Activated CD8-positive, alpha-beta T cell treated with anti-CD3 and anti-CD28 coated beads for 36 hours (primary cell): ENCODE measurements at regions of chr10 and their contacts with region 1.

Region 1: DNA sequence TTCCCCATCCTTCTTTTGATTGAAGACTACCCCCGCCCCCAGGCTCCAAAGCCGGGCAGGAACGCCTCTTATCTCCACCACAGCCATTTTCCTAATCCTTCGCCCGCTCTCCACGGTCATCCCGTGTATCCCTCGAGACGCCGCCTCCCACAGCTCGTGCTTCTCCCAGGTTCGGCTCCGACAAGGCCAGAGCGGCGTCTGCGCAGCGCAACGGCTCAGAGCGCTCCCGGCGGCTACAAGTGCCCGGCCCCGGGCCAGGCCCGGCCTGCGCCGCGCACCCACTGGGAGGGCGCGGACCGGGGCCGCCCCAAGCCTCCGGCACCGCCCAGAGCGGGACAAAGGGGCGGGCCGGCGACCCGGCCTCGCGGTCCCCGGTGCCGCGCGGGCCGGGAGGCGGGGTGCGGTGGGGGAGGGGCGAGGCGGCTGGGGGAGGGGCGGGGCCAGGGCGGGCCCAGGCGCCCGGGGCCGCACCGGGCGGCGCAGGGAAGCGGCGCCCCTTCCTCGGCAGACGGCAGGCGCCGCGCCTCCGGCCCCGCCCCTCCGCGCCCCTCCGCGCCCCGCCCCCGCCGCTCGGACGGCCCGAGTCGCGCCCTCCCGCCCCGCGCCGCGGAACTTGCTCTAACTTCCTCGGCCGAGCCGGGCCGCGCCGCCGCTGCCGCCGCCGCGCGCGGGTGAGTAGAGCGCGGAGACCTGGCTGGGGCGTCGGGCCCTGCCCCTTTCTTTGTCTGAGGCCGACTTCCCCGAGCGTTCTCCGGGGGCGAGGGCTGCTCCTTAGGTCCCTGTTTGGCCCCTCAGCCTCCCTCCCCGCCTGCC is at the start of gene TSPAN14:
- DNase-seq: peak; percentile 77
- ATAC-seq: peak; percentile 76
- H3K4me3 Mint-ChIP-seq: peak within 1 kb of the TSS; percentile 86
- H3K27ac Mint-ChIP-seq: peak within 1 kb of the TSS; percentile 95
- H3K4me1 Mint-ChIP-seq: peaks cover 39% of the 10 kb centered on the region
- H3K27me3 Mint-ChIP-seq: no peaks in the 10 kb centered on the region
- CTCF ChIP-seq: no peak
- total RNA-seq, gene TSPAN14: 43.9 to 45.5 TPM

Region 2: GRCh38 chr10:80211786-80212185 is 242.1 kb before region 1 on chr10:
- CTCF ChIA-PET with region 1: no interaction called
- POLR2A ChIA-PET with region 1: no interaction called
- intact Hi-C with region 1: no loop called
- DNase-seq: no peak
- ATAC-seq: no peak
- H3K4me3 Mint-ChIP-seq: no peak overlapping the region
- H3K27ac Mint-ChIP-seq: no peak overlapping the region
- H3K4me1 Mint-ChIP-seq: peaks cover 10% of the 10 kb centered on the region
- H3K27me3 Mint-ChIP-seq: no peaks in the 10 kb centered on the region
- CTCF ChIP-seq: no peak

Region 3: GRCh38 chr10:80437231-80437630 is 16.7 kb before region 1 on chr10:
- CTCF ChIA-PET with region 1: no interaction called
- POLR2A ChIA-PET with region 1: no interaction called
- intact Hi-C with region 1: no loop called
- DNase-seq: no peak
- ATAC-seq: no peak
- H3K4me3 Mint-ChIP-seq: no peak overlapping the region
- H3K27ac Mint-ChIP-seq: no peak overlapping the region
- H3K4me1 Mint-ChIP-seq: no peaks in the 10 kb centered on the region
- H3K27me3 Mint-ChIP-seq: no peaks in the 10 kb centered on the region
- CTCF ChIP-seq: no peak

Region 4: DNA sequence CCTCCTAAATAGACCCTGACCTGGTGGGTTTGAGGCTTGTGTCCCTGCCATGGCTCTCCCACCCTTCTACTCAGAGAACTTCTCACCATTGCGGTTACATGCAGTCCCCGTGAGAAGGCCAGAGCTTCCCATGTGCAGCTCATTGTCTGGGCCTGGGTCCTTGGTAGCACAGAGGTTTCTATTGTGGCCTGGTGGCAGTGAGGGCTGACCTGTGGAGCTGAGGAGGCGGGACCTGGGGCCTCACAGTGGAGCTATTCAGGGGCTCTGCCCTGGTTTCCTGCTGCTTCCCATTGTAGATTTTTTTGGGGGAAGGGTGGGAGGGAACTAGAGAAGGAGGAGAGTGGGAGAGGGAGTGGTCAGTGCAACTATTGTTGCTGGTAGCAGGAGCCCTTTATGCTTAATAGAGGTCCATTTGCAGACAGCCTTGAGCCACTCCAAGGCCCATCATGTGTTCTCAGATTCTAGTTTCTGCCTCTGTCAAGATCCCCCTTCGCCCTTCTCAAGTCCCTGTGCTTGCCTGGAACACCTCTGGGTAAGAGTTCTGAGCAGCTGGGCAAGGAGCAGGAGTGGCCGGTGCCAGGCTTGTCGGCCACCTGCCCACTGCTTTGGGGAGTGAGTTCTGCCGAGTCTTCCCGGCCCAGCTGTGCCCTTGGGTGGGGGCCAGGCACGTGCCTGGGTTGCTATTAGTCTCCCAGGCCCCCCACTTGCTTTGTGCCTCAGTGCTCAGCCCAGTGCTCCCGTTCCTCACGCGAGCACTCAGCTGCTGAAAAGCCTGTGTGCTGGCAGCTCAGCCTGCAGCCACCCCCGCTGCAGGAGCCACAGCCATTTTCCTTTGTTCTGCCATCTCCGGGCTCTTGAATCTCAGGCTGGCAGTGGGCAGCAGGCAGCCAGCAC is 10.9 kb after region 1 on chr10:
- CTCF ChIA-PET with region 1: interaction called, 72 read pairs
- POLR2A ChIA-PET with region 1: interaction called, 70 read pairs
- intact Hi-C with region 1: loop called (anchors 1 kb)
- DNase-seq: peak; percentile 60
- ATAC-seq: no peak
- H3K4me3 Mint-ChIP-seq: peak overlapping the region; percentile 71
- H3K27ac Mint-ChIP-seq: peak overlapping the region; percentile 97
- H3K4me1 Mint-ChIP-seq: peaks cover 94% of the 10 kb centered on the region
- H3K27me3 Mint-ChIP-seq: no peaks in the 10 kb centered on the region
- CTCF ChIP-seq: no peak

Region 5: GRCh38 chr10:80487791-80488538 is 34.1 kb after region 1 on chr10:
- CTCF ChIA-PET with region 1: interaction called, 27 read pairs
- POLR2A ChIA-PET with region 1: interaction called, 14 read pairs
- intact Hi-C with region 1: no loop called
- DNase-seq: peak; percentile 79
- ATAC-seq: peak; percentile 50
- H3K4me3 Mint-ChIP-seq: peak overlapping the region; percentile 40
- H3K27ac Mint-ChIP-seq: peak overlapping the region; percentile 91
- H3K4me1 Mint-ChIP-seq: peaks cover 93% of the 10 kb centered on the region
- H3K27me3 Mint-ChIP-seq: no peaks in the 10 kb centered on the region
- CTCF ChIP-seq: no peak

Region 6: GRCh38 chr10:80649183-80649582 is 195.3 kb after region 1 on chr10:
- CTCF ChIA-PET with region 1: no interaction called
- POLR2A ChIA-PET with region 1: no interaction called
- intact Hi-C with region 1: no loop called
- DNase-seq: no peak
- ATAC-seq: no peak
- H3K4me3 Mint-ChIP-seq: no peak overlapping the region
- H3K27ac Mint-ChIP-seq: no peak overlapping the region
- H3K4me1 Mint-ChIP-seq: no peaks in the 10 kb centered on the region
- H3K27me3 Mint-ChIP-seq: peaks cover 11% of the 10 kb centered on the region
- CTCF ChIP-seq: no peak